ENCODE measurements at regions of chr1 and their contacts with region 1.

Region 1: DNA sequence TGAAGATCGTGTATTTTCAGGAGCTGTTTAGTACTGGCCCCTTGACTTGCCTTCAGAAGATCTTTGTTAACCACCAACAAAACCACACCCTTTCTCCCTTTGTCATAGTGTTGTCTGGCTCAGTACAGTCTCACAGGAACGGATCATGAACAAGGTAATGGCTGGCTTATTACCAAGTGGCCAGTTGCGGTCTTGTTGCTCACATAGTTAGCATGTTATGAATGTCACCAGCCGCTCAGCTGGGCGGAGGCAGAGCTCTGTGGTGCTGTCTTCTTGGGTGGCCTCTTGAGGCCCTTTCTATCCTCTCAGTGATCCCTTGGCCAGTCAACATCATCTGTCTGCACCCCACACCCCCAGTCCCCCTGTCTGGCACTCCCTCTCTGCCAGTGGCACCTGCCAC is 21.4 kb downstream of the CNIH3 start:
- DNase-seq: peak in 1 of 2 experiments; percentile 88
- H3K4me3 ChIP-seq: no peak overlapping the region
- H3K27ac ChIP-seq: no peak overlapping the region
- H3K4me1 ChIP-seq: peaks cover 8% of the 10 kb centered on the region
- H3K27me3 ChIP-seq: no peaks in the 10 kb centered on the region
- CTCF ChIP-seq: no peak

Region 2: DNA sequence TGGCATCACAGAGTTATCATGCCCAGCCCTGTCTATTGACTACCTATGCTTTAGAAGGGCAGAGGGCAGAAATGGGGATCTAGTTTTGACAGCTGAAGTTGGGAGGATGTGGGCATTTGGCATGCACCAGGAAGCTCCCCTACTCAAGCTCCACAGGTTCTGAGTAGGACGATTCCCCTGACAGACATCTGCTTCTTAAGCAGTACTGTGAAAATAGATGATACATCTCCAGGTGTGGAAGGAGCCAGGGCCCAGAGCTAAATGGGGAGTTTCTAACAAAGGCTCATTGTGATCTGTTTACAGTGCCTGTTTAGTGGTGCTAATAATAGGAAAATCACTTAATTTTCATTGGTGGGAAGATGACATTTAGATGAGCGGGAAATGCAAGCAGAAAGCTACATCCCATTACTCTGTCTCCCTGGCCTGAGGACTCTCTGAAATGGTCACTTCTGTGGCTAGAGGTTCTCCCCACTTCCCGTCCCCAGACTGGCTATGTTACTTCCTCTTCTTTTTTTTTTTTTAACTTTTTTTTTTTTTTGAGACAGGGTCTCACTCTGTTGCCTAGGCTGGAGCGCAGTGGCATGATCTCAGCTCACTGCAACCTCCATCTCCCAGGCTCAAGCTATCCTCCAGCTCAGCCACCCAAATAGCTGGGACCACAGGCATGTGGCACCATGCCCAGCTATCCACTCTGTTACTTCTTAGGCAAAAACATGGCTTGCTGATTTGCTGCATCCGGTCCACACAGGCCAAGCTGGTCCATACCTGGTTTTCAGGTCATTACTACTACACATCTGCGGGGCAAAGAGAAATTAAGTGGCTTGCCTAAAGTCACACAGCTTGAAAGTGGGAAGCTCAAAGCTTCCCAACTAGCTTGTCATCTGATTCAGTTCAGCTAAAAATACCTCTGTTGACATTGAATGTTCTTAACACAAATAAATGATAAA is 44.6 kb before region 1 on chr1:
- CTCF ChIA-PET with region 1: no interaction called
- POLR2A ChIA-PET with region 1: interaction called, 26 read pairs
- intact Hi-C with region 1: no loop called
- DNase-seq: peak in 1 of 2 experiments; percentile 88
- H3K4me3 ChIP-seq: no peak overlapping the region
- H3K27ac ChIP-seq: no peak overlapping the region
- H3K4me1 ChIP-seq: no peaks in the 10 kb centered on the region
- H3K27me3 ChIP-seq: no peaks in the 10 kb centered on the region
- CTCF ChIP-seq: no peak

Region 3: GRCh38 chr1:224615861-224616755 is 21.4 kb before region 1 on chr1 and contains the start of gene CNIH3:
- CTCF ChIA-PET with region 1: interaction called, 3 read pairs
- POLR2A ChIA-PET with region 1: no interaction called
- intact Hi-C with region 1: loop called (anchors 2 kb)
- DNase-seq: peak; percentile 75 to 83
- H3K4me3 ChIP-seq: peak within 1 kb of the TSS; percentile 87
- H3K27ac ChIP-seq: peak within 1 kb of the TSS; percentile 23; the same call in 1 of the 2 replicates
- H3K4me1 ChIP-seq: peaks cover 34% of the 10 kb centered on the region
- H3K27me3 ChIP-seq: no peaks in the 10 kb centered on the region
- CTCF ChIP-seq: no peak
- total RNA-seq, gene CNIH3: 7.4 and 8.4 TPM in 2 replicates

Region 4: GRCh38 chr1:224733027-224733911 is 95.8 kb after region 1 on chr1:
- CTCF ChIA-PET with region 1: no interaction called
- POLR2A ChIA-PET with region 1: no interaction called
- intact Hi-C with region 1: loop called (anchors 5 kb)
- DNase-seq: peak; percentile 73 to 94
- H3K4me3 ChIP-seq: peak overlapping the region; percentile 40; the same call in 1 of the 2 replicates
- H3K27ac ChIP-seq: peak overlapping the region; percentile 97
- H3K4me1 ChIP-seq: peaks cover 53% of the 10 kb centered on the region
- H3K27me3 ChIP-seq: no peaks in the 10 kb centered on the region
- CTCF ChIP-seq: no peak

Measured in PC-9 (cell line).